ENCODE measurements at regions of chr11 and their contacts with region 1.

Region 1: GRCh38 chr11:36292311-36292722 is 3.1 kb upstream of the COMMD9 start:
- DNase-seq: peak; percentile 46
- H3K4me3 ChIP-seq: no peak overlapping the region
- CTCF ChIP-seq: peak; percentile 27

Region 2: DNA sequence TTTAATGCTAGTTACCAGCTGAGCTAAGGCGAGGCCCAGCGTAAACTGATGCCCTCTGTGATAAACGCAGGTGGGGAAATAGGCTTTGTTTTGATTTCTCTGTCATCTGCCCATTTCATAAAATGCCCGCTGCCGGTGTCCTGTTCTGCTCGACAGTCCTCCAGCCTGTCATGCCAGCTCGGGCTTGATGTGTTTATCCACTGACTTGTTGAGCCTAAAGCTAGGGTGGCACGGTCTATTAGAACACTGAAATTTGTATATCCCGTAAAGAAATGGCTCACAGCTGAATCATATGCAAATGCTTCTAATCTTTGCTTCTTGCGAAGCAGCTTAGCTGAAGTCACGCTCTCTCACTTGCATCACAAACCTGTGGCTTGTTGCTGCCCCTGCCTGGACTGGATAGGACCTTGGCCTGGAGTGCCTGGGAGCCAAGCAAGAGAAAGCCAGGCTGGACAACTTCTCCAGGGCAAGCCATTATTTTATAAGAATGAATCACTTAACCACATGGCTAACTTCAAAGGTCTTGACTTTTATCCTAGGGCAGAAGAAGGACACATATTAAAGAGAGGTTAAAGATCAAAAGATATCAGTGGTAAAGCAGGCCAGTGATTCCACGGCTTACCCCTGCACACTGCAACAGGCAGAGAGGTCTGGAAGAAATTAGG is 1638.4 kb before region 1 on chr11:
- in situ Hi-C with region 1: no loop called
- DNase-seq: peak; percentile 90
- H3K4me3 ChIP-seq: no peak overlapping the region
- CTCF ChIP-seq: no peak

Region 3: DNA sequence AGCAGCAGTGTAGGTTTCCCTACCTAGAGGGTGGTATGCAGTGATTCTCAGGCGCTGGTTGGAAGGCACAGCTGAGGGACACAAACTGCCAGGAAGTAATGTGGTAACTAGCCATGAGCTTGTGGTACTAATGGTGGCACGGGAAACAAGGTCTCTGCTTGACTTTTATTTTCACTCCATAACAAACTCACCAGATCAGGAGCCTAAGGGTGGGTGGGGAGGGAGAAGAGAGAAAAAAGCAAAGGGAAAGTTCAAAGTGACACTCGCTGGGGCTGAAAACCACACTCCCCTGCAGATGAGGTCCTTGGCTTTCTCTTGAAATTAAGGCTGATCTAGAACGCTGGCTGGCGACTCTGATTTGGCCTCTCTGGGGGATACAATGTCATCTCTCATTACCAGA is 195.8 kb after region 1 on chr11:
- in situ Hi-C with region 1: loop called (anchors 10 kb)
- DNase-seq: no peak
- H3K4me3 ChIP-seq: no peak overlapping the region
- CTCF ChIP-seq: no peak